ENCODE measurements at regions of chr3 and their contacts with region 1.

Region 1: GRCh38 chr3:108130701-108131474 is 40.1 kb upstream of the CD47 start:
- DNase-seq: no peak
- ATAC-seq: no peak
- H3K4me3 ChIP-seq: no peak overlapping the region
- H3K4me3 Mint-ChIP-seq: peak overlapping the region in 1 of 3 donors; percentile 62
- H3K27ac ChIP-seq: no peak overlapping the region
- H3K27ac Mint-ChIP-seq: peak overlapping the region; percentile 10 to 52
- H3K4me1 ChIP-seq: peaks cover 39 to 51% of the 10 kb centered on the region in 2 experiments
- H3K4me1 Mint-ChIP-seq: peaks cover 89 to 96% (median 91%) of the 10 kb centered on the region in 3 donors
- H3K27me3 ChIP-seq: no peaks in the 10 kb centered on the region
- H3K27me3 Mint-ChIP-seq: no peaks in the 10 kb centered on the region

Region 2: GRCh38 chr3:108103886-108104797 is 26.7 kb before region 1 on chr3:
- CTCF ChIA-PET with region 1: no interaction called
- POLR2A ChIA-PET with region 1: no interaction called
- DNase-seq: no peak
- ATAC-seq: no peak
- H3K4me3 ChIP-seq: no peak overlapping the region
- H3K4me3 Mint-ChIP-seq: no peak overlapping the region
- H3K27ac ChIP-seq: no peak overlapping the region
- H3K27ac Mint-ChIP-seq: no peak overlapping the region
- H3K4me1 ChIP-seq: peaks cover 21 to 29% of the 10 kb centered on the region in 2 experiments
- H3K4me1 Mint-ChIP-seq: peaks cover 37 to 53% (median 52%) of the 10 kb centered on the region in 3 donors
- H3K27me3 ChIP-seq: no peaks in the 10 kb centered on the region
- H3K27me3 Mint-ChIP-seq: no peaks in the 10 kb centered on the region

Region 3: DNA sequence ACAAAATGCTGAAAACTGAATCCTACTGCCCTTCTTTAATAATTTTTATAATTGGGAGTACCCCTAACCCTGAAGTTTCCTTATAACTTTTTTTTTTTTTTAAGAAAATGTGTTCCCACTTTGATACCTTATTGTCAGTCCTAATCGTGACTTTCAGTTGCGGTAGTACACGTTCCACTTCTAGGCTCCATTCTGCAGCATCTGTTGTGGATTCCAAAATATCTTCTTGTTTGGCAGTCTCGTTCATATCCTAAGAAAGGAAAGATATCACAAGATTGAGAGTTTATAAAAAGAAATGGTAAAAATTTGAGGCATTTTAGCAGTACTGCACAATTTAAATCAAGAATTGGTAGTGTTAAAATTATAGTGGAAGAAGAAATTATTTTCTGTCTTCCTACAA is 60.5 kb after region 1 on chr3:
- CTCF ChIA-PET with region 1: no interaction called
- POLR2A ChIA-PET with region 1: interaction called in 1 of 2 experiments, 10 read pairs
- DNase-seq: no peak
- ATAC-seq: no peak
- H3K4me3 ChIP-seq: no peak overlapping the region
- H3K4me3 Mint-ChIP-seq: no peak overlapping the region
- H3K27ac ChIP-seq: no peak overlapping the region
- H3K27ac Mint-ChIP-seq: no peak overlapping the region
- H3K4me1 ChIP-seq: no peaks in the 10 kb centered on the region
- H3K4me1 Mint-ChIP-seq: no peaks in the 10 kb centered on the region
- H3K27me3 ChIP-seq: no peaks in the 10 kb centered on the region
- H3K27me3 Mint-ChIP-seq: no peaks in the 10 kb centered on the region